Endothelial cell of umbilical vein (primary cell): ENCODE measurements at regions of chr5 and their contacts with region 1.

Region 1: GRCh38 chr5:147310059-147310704 is 75.4 kb downstream of the STK32A start:
- DNase-seq: peak; percentile 96
- H3K4me3 ChIP-seq: no peak overlapping the region
- H3K27ac ChIP-seq: peak overlapping the region; percentile 83
- H3K4me1 ChIP-seq: peaks cover 15% of the 10 kb centered on the region
- H3K27me3 ChIP-seq: no peaks in the 10 kb centered on the region
- CTCF ChIP-seq: no peak
- POLR2A ChIP-seq: no peak

Region 2: DNA sequence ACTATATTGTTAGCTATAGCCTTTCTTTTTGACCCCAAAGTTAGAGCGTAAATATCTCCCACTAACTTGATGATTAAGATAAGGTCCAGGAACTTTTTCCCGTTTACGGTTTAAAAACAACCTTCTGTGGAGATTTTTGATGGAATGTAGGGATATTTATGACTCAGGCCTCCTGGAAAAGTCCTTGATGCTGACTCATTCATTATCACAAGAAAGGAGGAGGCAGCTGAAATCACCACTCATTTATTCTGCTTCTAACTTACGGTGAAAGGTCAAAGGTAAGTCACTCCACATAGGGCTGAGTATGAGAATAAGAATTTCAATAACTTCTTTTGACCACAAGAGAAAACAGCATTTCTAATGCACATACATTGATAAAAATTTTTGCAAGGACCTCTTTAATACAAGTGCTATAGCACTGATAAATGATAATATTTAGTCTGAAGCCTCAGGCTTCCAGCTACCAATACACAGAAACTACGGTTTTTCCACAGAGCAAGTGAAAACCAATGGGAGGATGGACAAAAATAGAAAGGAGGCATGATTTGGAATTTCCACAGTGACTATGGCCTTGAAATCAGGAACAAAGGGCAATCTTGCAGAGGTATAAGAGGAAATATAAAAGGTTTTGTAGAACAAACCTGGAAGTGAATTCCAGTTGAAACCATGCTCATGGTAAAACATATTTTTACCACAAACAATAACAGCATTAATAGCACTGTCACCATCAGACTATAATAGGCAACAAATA is 578.1 kb before region 1 on chr5:
- CTCF ChIA-PET with region 1: no interaction called
- POLR2A ChIA-PET with region 1: no interaction called
- dilution Hi-C with region 1: no loop called
- intact Hi-C with region 1: loop called (anchors 5 kb)
- DNase-seq: peak; percentile 92
- H3K4me3 ChIP-seq: peak overlapping the region in 1 of 3 experiments; percentile 23
- H3K27ac ChIP-seq: peak overlapping the region; percentile 81
- H3K4me1 ChIP-seq: peaks cover 34% of the 10 kb centered on the region
- H3K27me3 ChIP-seq: no peaks in the 10 kb centered on the region
- CTCF ChIP-seq: no peak
- POLR2A ChIP-seq: no peak

Region 3: DNA sequence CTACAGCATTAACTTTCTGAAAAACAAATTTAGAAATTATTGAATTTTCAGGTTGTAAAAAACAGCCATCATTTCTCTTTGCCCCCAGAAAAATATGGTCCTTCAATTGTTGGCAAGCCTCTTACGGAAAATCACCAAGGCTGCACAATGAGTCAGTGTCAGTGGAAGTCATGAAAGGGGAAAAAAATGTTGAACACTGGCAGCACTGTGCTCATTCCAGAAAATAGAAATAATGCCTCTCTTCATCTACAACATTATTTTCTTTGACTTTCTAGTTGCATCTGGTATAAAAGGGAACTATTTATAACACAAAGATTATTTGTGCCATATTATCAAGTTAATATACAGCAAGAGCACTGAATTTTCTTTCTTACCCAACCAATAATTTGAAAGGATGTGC is 102.0 kb before region 1 on chr5:
- CTCF ChIA-PET with region 1: no interaction called
- POLR2A ChIA-PET with region 1: no interaction called
- dilution Hi-C with region 1: no loop called
- intact Hi-C with region 1: no loop called
- DNase-seq: no peak
- H3K4me3 ChIP-seq: no peak overlapping the region
- H3K27ac ChIP-seq: no peak overlapping the region
- H3K4me1 ChIP-seq: no peaks in the 10 kb centered on the region
- H3K27me3 ChIP-seq: no peaks in the 10 kb centered on the region
- CTCF ChIP-seq: no peak
- POLR2A ChIP-seq: no peak

Region 4: GRCh38 chr5:147223948-147224791 is 86.0 kb before region 1 on chr5:
- CTCF ChIA-PET with region 1: no interaction called
- POLR2A ChIA-PET with region 1: no interaction called
- dilution Hi-C with region 1: no loop called
- intact Hi-C with region 1: no loop called
- DNase-seq: peak; percentile 60
- H3K4me3 ChIP-seq: no peak overlapping the region
- H3K27ac ChIP-seq: no peak overlapping the region
- H3K4me1 ChIP-seq: no peaks in the 10 kb centered on the region
- H3K27me3 ChIP-seq: peaks cover 4% of the 10 kb centered on the region in 2 experiments
- CTCF ChIP-seq: peak; percentile 44 to 64
- POLR2A ChIP-seq: no peak

Region 5: GRCh38 chr5:147290261-147290660 is 19.9 kb before region 1 on chr5:
- CTCF ChIA-PET with region 1: no interaction called
- POLR2A ChIA-PET with region 1: no interaction called
- dilution Hi-C with region 1: no loop called
- intact Hi-C with region 1: no loop called
- DNase-seq: no peak
- H3K4me3 ChIP-seq: no peak overlapping the region
- H3K27ac ChIP-seq: no peak overlapping the region
- H3K4me1 ChIP-seq: no peaks in the 10 kb centered on the region
- H3K27me3 ChIP-seq: peaks cover 4 to 6% of the 10 kb centered on the region in 2 experiments
- CTCF ChIP-seq: no peak
- POLR2A ChIP-seq: no peak